HCT116 (cell line): ENCODE measurements at regions of chr16 and their contacts with region 1.

Region 1: DNA sequence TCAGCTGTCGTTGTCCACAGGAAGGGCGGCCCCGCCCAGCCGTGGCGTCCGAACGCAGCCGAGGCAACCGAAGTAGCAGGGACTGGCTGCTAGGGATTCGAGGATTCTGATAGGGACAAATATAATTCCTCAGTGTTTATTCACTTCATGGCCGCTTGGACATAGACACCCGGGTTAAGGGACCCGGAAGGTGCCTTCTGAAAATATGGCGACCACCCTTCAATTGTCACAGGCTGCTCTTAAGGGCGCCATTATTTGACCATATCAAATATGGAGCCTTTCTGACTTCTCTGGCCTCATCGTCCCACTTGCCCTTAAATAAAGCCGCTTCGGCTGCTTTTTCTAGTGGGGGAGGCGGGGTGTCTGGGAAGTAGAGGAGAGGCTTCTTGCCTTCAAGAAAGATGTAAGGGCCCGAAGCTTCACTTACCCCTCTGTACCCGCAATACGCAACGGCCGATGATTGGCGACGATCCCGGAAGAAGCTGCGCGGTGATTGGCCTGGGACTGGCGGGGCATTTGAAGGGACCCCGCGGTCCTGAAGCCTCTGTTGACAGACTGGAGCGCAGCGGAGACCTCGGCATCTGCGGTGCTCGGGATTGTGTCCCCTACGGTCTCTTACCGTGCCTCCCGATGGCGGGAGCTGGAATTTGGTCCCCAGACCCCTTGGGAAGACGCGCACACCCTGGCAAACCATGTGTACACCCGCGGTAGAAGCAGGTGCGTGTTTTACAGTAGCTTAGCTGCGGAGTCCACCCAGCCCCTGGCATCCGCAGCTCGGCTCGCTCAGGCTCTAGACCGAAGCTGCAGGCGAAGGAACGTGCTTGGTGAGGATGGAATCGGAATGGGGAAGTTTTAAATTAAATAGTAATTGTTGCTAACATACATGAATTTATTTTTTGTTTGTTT is at the start of gene ZNF688:
- DNase-seq: peak; percentile 93
- ATAC-seq: peak; percentile 85
- H3K4me3 ChIP-seq: peak within 1 kb of the TSS; percentile 83 to 90
- H3K27ac ChIP-seq: peak within 1 kb of the TSS; percentile 87
- H3K4me1 ChIP-seq: peaks cover 9 to 39% of the 10 kb centered on the region in 2 experiments; a peak in 3 of 4 replicates
- H3K27me3 ChIP-seq: no peaks in the 10 kb centered on the region
- CTCF ChIP-seq: no peak
- POLR2A ChIP-seq: peak; percentile 47
- RAD21 ChIP-seq: no peak
- total RNA-seq, gene ZNF688: 3.6 TPM

Region 2: GRCh38 chr16:30557957-30558788 is 13.8 kb before region 1 on chr16 and contains the start of gene ZNF764:
- CTCF ChIA-PET with region 1: interaction called, 4 read pairs
- POLR2A ChIA-PET with region 1: interaction called, 21 read pairs
- RAD21 ChIA-PET with region 1: interaction called in 1 of 2 experiments, 3 read pairs
- intact Hi-C with region 1: no loop called
- DNase-seq: peak; percentile 97
- ATAC-seq: peak; percentile 97
- H3K4me3 ChIP-seq: peak within 1 kb of the TSS; percentile 79 to 94
- H3K27ac ChIP-seq: peak within 1 kb of the TSS; percentile 85
- H3K4me1 ChIP-seq: peaks cover 10 to 21% of the 10 kb centered on the region in 2 experiments
- H3K27me3 ChIP-seq: no peaks in the 10 kb centered on the region
- CTCF ChIP-seq: no peak
- POLR2A ChIP-seq: peak; percentile 88
- RAD21 ChIP-seq: no peak; the same call in 1 of the 2 replicates
- total RNA-seq, gene ZNF764: 9.1 TPM